ENCODE measurements at regions of chr13 and their contacts with region 1.

Region 1: DNA sequence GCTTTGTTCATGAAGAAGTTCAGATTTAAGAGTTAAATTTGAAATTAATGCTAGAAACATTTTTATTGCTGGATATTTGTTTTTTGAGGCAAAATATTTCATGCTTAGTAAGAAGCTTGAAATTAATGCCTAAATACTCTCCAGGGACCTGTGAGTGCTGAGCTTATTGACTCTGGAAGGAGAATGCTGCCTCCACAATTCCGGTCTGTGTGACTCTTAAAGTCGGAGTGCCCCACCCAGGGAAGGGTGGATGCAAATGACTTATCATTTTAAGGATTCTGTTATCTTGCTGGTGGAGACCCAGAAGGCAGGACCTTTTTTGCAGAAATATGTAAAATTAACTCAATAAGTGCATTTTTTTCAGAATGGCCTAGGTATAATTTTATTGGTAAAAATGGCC is 143.8 kb upstream of the RXFP2 start:
- DNase-seq: no peak
- H3K4me3 ChIP-seq: no peak overlapping the region
- H3K27ac ChIP-seq: no peak overlapping the region
- H3K4me1 ChIP-seq: no peaks in the 10 kb centered on the region
- H3K27me3 ChIP-seq: no peaks in the 10 kb centered on the region
- CTCF ChIP-seq: no peak

Region 2: GRCh38 chr13:31322026-31322425 is 273.5 kb before region 1 on chr13:
- CTCF ChIA-PET with region 1: no interaction called
- dilution Hi-C with region 1: no loop called
- in situ Hi-C with region 1: no loop called
- intact Hi-C with region 1: no loop called
- DNase-seq: peak; percentile 24
- H3K4me3 ChIP-seq: no peak overlapping the region
- H3K27ac ChIP-seq: no peak overlapping the region
- H3K4me1 ChIP-seq: no peaks in the 10 kb centered on the region
- H3K27me3 ChIP-seq: no peaks in the 10 kb centered on the region
- CTCF ChIP-seq: no peak

Region 3: GRCh38 chr13:31545616-31546015 is 49.9 kb before region 1 on chr13:
- CTCF ChIA-PET with region 1: no interaction called
- dilution Hi-C with region 1: no loop called
- in situ Hi-C with region 1: no loop called
- intact Hi-C with region 1: no loop called
- DNase-seq: no peak
- H3K4me3 ChIP-seq: no peak overlapping the region
- H3K27ac ChIP-seq: no peak overlapping the region
- H3K4me1 ChIP-seq: no peaks in the 10 kb centered on the region
- H3K27me3 ChIP-seq: peaks cover 10% of the 10 kb centered on the region
- CTCF ChIP-seq: no peak

Region 4: DNA sequence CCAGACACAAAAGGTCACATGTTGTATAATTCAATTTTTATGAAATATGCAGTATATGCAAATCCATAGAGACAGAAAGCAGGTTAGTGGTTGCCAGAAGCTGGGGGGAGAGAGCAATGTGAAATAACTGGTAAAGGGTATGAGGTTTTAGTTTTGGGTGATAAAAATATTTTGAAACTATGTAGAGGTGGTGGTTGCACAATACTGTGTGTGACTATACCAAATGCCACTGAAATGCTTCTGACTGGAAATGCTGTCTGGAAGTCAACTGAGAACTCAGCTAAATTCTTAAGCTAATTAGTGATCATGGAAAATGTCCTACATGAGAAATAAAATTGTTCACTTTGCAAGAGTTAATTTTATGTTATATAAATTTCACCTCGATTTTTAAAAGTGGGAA is 78.5 kb after region 1 on chr13:
- CTCF ChIA-PET with region 1: no interaction called
- dilution Hi-C with region 1: loop called (anchors 5 kb)
- in situ Hi-C with region 1: no loop called
- intact Hi-C with region 1: no loop called
- DNase-seq: no peak
- H3K4me3 ChIP-seq: no peak overlapping the region
- H3K27ac ChIP-seq: no peak overlapping the region
- H3K4me1 ChIP-seq: no peaks in the 10 kb centered on the region
- H3K27me3 ChIP-seq: no peaks in the 10 kb centered on the region
- CTCF ChIP-seq: no peak